GM10248 (cell line): ENCODE measurements at regions of chr13 and their contacts with region 1.

Region 1: GRCh38 chr13:22801402-22802003 is 379.3 kb upstream of the SGCG start:
- DNase-seq: no peak
- CTCF ChIP-seq: peak; percentile 31

Region 2: GRCh38 chr13:22629374-22629773 is 172.1 kb before region 1 on chr13:
- CTCF ChIA-PET with region 1: no interaction called
- POLR2A ChIA-PET with region 1: no interaction called
- DNase-seq: no peak
- CTCF ChIP-seq: no peak

Region 3: DNA sequence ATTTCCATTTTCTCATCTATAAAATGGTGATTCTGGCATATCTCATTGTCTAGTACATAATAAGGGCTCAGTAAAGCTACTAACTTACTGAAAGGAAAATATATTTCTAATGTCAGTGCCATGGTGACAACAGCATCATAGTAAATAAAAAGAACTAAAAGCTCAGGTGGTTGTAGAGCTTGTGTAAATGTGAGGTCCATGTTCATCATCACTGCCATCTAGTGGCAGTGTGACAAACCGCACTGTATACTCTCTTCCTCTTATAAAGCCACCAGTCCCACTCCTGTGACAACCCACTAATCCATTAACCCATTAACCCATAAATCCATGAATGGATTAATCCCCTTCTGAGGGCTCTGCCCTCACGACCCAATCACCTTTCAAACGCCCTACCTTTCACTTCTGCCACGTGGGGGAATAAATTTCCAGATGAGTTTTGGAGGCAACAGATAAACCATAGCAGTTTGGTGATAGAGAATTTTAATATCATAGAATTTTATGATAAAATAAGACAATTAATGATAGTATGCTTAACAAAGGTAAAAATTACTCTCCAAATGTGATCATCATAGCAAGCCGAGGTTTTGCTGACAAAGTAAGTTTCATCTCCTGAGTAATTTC is 218.8 kb after region 1 on chr13:
- CTCF ChIA-PET with region 1: interaction called, 13 read pairs
- POLR2A ChIA-PET with region 1: no interaction called
- DNase-seq: peak; percentile 42
- CTCF ChIP-seq: peak; percentile 82

Region 4: GRCh38 chr13:23320926-23321534 is 519.5 kb after region 1 on chr13:
- CTCF ChIA-PET with region 1: interaction called, 10 read pairs
- POLR2A ChIA-PET with region 1: no interaction called
- DNase-seq: no peak
- CTCF ChIP-seq: no peak